Dorsolateral prefrontal cortex (tissue), 120 donors: ENCODE measurements at regions of chr11 and their contacts with region 1.

Region 1: DNA sequence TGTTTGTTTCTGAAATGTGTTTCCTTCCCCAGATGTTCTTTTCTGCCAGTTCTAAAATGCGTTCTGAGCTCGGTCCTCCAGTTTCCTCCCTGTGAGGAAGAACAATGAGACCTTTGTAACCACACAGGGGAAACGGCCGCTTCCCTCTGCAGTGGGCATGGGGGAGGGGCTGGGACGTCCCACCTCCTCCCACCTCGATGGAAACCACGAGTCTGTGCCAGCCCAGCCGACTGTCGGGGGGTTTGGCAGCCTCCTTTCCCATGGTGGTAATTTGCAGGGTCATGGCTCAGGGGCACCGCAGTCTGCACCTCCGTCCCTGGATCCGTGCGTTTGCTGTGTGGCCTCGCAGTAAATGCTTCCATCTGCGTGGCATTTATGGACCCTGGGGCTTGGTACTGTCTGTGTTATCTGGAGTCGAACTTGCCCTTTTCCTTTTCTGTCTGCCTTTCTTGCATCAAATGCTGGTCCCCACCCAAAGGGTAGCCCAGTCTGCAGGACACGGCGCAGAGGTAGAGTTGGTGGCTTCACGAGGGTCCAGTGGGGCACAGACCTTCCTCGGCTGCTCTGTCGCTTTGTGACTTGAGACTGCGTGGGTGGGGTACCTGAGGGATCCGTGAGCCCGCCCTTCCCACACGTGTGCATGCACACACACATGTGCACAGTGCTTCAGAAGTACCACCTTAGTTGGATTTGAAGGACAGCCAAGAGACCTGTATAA is 16.1 kb downstream of the LRP5 start:
- DNase-seq: peak in 7 of 10 donors; percentile 52 to 69 (median 62)
- H3K4me3 ChIP-seq: peak overlapping the region in 37 of 59 donors; percentile 1 to 54 (median 24)
- H3K27ac ChIP-seq: peak overlapping the region; percentile 40 to 94 (median 85)
- H3K27me3 ChIP-seq: peaks cover 0 to 5% (median 0%) of the 10 kb centered on the region in 45 donors
- CTCF ChIP-seq: peak in 9 of 56 donors; percentile 8 to 21 (median 14)

Region 2: GRCh38 chr11:68370211-68371111 is 41.9 kb after region 1 on chr11:
- intact Hi-C with region 1: loop called in 1 of 2 experiments (anchors 5 kb)
- DNase-seq: no peak
- H3K4me3 ChIP-seq: no peak overlapping the region
- H3K27ac ChIP-seq: peak overlapping the region in 16 of 59 donors; percentile 6 to 64 (median 37)
- H3K27me3 ChIP-seq: no peaks in the 10 kb centered on the region
- CTCF ChIP-seq: no peak

Region 3: DNA sequence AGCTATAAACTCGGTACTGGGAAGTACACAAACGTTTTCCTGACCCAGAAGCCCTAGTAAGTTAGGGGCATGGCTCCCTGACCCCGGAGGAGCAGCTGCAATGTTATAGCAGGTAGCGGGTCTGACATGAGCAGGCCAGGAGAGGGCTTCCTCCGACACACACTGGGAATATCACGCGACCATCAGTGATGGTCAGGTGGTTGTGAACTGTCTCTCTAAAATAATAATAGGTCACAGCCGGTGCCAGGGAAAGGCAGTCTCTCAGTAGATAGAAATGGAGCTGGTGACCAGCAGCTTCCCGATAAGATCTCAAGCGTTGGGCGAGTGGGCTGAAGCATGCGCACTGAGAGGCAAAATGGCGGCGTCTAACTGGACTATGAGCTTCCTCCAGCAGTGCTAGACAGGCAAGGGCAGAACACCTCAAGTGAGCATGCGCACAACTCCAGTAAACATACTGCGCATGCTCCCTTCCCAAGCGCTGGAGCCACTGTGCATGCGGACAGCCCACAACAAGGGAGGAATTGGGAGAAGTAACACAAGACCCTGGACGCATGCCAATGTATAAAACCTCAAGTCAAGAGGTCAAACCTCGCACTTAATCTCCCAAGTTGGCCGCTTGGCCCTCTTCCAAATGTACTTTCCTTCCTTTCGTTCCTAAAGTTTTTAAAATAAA is 445.1 kb after region 1 on chr11:
- intact Hi-C with region 1: no loop called
- DNase-seq: no peak
- H3K4me3 ChIP-seq: no peak overlapping the region
- H3K27ac ChIP-seq: no peak overlapping the region
- H3K27me3 ChIP-seq: no peaks in the 10 kb centered on the region
- CTCF ChIP-seq: no peak